Transverse colon (tissue), 4 donors: ENCODE measurements at regions of chr19 and their contacts with region 1.

Region 1: GRCh38 chr19:3576718-3577527 is 4.2 kb downstream of the HMG20B start:
- DNase-seq: peak; percentile 64
- H3K4me3 ChIP-seq: peak overlapping the region in 3 of 4 donors; percentile 17 to 36 (median 30)
- H3K27ac ChIP-seq: peak overlapping the region; percentile 57 to 80 (median 70)
- H3K4me1 ChIP-seq: peaks cover 12 to 55% (median 45%) of the 10 kb centered on the region in 4 donors
- H3K27me3 ChIP-seq: no peaks in the 10 kb centered on the region
- CTCF ChIP-seq: no peak
- EP300 ChIP-seq: no peak
- POLR2A ChIP-seq: no peak

Region 2: DNA sequence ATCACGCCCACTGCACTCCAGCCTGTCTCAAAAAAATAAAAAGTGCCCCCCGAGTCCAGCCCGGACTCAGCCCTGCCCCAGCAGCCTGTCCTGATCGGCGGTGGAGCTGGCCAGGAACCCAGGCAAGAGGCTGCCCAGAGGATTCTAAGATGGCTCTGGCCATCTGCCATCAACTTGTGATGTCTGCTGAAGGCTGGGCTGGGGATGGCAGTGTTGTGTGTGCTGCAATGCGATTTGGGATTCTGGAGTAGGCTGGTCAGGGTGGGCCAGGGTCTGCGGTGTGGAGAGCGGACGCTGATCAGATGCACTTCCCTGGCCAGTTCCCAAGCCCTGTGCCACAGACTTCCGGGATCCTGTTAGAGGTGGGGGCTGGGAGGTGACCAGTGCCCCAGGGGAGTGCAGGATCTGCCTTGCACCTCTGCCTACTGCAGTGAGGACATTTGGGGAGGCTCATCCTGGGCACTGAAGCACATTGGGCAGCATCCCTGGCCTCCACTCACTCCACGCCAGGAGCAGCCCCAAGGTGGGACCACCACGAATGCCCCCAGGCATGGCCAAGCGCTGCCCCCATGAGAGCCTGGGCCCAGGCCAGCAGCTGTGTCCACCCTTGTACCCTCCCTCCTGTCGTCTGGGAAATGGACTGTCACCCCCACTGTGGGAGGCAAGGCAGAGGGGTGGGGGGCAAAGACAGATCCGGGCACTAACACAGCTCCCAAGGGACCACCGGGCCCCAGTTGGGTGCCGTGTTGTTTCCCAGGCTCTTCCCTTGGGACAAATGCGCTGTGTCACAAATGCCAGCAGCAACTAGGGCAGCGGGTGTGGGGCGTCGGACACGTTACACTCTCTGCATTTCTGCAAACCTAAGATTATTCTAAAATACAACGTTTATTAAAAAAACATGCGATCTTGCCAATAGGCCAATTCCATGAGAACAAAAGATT is 33.1 kb after region 1 on chr19:
- in situ Hi-C with region 1: no loop called
- intact Hi-C with region 1: loop called (anchors 1 kb)
- DNase-seq: no peak
- H3K4me3 ChIP-seq: no peak overlapping the region
- H3K27ac ChIP-seq: peak overlapping the region in 1 of 4 donors; percentile 14
- H3K4me1 ChIP-seq: peaks cover 7 to 36% (median 30%) of the 10 kb centered on the region in 4 donors
- H3K27me3 ChIP-seq: peaks cover 4% of the 10 kb centered on the region
- CTCF ChIP-seq: no peak
- EP300 ChIP-seq: no peak
- POLR2A ChIP-seq: no peak

Region 3: GRCh38 chr19:3626473-3627350 is 49.8 kb after region 1 on chr19 and contains the start of gene CACTIN:
- in situ Hi-C with region 1: no loop called
- intact Hi-C with region 1: no loop called
- DNase-seq: peak; percentile 99
- H3K4me3 ChIP-seq: peak within 1 kb of the TSS; percentile 91 to 99 (median 97)
- H3K27ac ChIP-seq: peak within 1 kb of the TSS; percentile 86 to 96 (median 92)
- H3K4me1 ChIP-seq: peaks cover 14 to 24% (median 17%) of the 10 kb centered on the region in 4 donors
- H3K27me3 ChIP-seq: no peaks in the 10 kb centered on the region
- CTCF ChIP-seq: no peak
- EP300 ChIP-seq: no peak
- POLR2A ChIP-seq: peak; percentile 79
- total RNA-seq, gene CACTIN: 21.9 to 88.4 (median 53.0) TPM